ENCODE measurements at regions of chr7 and their contacts with region 1.

Region 1: DNA sequence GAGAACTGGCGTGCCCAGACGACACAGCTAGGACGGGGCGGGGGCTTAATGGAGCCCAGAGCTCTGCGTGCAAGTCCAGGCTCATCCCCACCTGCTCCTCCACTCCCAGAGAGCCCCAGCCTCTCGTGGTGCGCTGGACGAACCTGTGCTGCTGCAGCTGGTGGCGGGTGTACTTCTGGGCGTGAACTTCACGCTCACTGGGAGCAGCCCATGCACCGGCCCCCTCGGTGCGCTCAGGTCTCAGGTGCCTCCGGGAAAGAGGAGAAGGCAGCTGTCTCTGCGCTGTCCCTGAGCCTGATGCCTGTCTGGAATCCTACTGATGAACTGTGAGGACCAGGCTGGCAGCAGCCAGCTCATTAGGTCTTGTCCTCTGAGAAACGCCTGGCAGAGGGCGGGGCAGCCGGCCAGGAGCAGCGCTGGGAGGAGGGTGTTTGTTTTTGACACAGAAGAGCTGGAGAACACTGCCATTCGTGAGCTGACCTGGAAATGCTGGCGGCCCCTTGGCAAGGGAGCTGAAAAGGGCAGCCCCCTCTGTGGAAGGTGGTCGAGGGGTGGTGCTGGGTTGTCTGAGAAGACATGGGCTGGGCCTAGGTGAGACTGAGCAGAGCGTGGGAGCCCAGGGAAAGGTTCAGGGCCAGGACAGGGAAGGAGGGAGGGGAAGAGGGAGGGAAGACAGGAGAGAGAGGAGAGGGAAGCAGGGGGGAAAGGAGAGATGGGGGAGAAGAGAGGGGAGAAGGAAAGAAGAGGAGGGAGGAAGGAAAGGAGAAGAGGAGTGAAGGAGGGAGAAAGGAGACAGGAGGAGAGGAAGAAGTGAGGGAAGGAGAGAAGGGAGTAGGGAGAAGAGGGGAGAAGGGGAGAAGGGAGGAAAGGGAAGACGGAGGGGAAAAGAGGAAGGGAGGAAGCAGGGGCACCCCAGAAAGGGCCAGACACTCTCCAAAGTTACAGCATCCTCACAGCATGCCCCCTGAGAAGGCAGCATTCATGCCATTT is 53.5 kb upstream of the TNS3 start:
- DNase-seq: peak; percentile 57
- ATAC-seq: peak; percentile 84
- H3K4me3 ChIP-seq: peak overlapping the region; percentile 52 to 74 (median 57)
- H3K27ac ChIP-seq: peak overlapping the region; percentile 7
- H3K4me1 ChIP-seq: peaks cover 66% of the 10 kb centered on the region
- H3K27me3 ChIP-seq: no peaks in the 10 kb centered on the region
- CTCF ChIP-seq: peak; percentile 16
- EP300 ChIP-seq: no peak
- POLR2A ChIP-seq: peak in 1 of 2 experiments; percentile 55; a peak in 2 of 4 replicates
- RAD21 ChIP-seq: 0 out of 2 replicates have a peak, but pooled peaks have one; percentile 39

Region 2: GRCh38 chr7:47581806-47582763 is 53.3 kb before region 1 on chr7 and contains the start of gene TNS3:
- CTCF ChIA-PET with region 1: no interaction called
- POLR2A ChIA-PET with region 1: interaction called, 5 read pairs
- in situ Hi-C with region 1: no loop called
- intact Hi-C with region 1: loop called (anchors 5 kb)
- DNase-seq: no peak
- ATAC-seq: peak; percentile 83
- H3K4me3 ChIP-seq: peak within 1 kb of the TSS; percentile 86 to 91 (median 89)
- H3K27ac ChIP-seq: peak within 1 kb of the TSS; percentile 82
- H3K4me1 ChIP-seq: peaks cover 56% of the 10 kb centered on the region
- H3K27me3 ChIP-seq: no peaks in the 10 kb centered on the region; a peak in 1 of 5 replicates
- CTCF ChIP-seq: peak; percentile 26; the same call in 1 of the 2 replicates
- EP300 ChIP-seq: no peak
- POLR2A ChIP-seq: peak; percentile 25 to 39; a peak in 2 of 4 replicates
- RAD21 ChIP-seq: peak; percentile 89
- total RNA-seq, gene TNS3: 51.3 and 55.7 TPM in 2 replicates

Region 3: GRCh38 chr7:47596502-47597202 is 38.7 kb before region 1 on chr7:
- CTCF ChIA-PET with region 1: no interaction called
- POLR2A ChIA-PET with region 1: no interaction called
- in situ Hi-C with region 1: no loop called
- intact Hi-C with region 1: no loop called
- DNase-seq: peak; percentile 28
- ATAC-seq: peak; percentile 65
- H3K4me3 ChIP-seq: peak overlapping the region in 1 of 3 experiments; percentile 13; a peak in 1 of 6 replicates
- H3K27ac ChIP-seq: peak overlapping the region; percentile 26
- H3K4me1 ChIP-seq: peaks cover 51% of the 10 kb centered on the region
- H3K27me3 ChIP-seq: no peaks in the 10 kb centered on the region
- CTCF ChIP-seq: peak; percentile 40
- EP300 ChIP-seq: no peak
- POLR2A ChIP-seq: no peak
- RAD21 ChIP-seq: peak; percentile 17; the same call in 1 of the 2 replicates

Region 4: DNA sequence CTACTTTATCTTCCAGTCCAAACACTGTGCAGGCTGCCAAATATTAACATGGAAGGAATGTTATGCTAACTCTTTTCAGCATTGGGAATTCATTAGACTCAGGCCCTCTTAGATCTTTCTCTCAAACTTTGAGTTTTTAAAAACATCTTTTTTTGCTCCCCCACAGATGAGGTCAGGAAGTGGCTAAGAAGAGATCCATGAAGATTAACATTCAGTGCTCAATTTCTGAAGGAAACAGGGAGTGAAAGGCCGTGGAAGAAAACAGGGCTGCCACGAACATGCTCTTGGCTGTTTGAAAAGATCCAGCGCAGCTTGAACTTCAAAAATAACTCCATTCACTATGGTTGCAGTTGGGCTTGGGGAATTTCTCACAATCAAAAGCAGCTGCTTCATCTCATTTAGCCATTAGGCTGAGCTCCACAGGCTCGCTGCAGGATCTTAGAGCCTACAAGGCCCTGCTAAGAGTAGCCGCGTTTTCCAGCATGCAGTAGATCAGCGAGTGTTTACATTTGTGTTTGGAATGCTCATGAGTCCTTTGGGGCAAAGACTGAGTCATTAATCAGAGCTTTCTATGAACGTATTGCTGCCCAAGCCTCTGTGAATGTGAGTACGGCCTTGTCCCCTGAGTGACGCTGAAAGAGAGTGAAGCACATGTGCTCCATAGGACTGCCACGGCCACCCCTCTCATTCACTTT is 12.3 kb before region 1 on chr7:
- CTCF ChIA-PET with region 1: no interaction called
- POLR2A ChIA-PET with region 1: interaction called, 14 read pairs
- in situ Hi-C with region 1: no loop called
- intact Hi-C with region 1: no loop called
- DNase-seq: peak; percentile 89
- ATAC-seq: peak; percentile 93
- H3K4me3 ChIP-seq: peak overlapping the region in 2 of 3 experiments; percentile 13 to 46; a peak in 2 of 6 replicates
- H3K27ac ChIP-seq: peak overlapping the region; percentile 71
- H3K4me1 ChIP-seq: peaks cover 64% of the 10 kb centered on the region
- H3K27me3 ChIP-seq: no peaks in the 10 kb centered on the region
- CTCF ChIP-seq: no peak
- EP300 ChIP-seq: peak in 1 of 2 experiments; percentile 58; a peak in 1 of 4 replicates
- POLR2A ChIP-seq: peak in 1 of 2 experiments; percentile 54; a peak in 2 of 4 replicates
- RAD21 ChIP-seq: no peak

Region 5: GRCh38 chr7:47669061-47669891 is 33.9 kb after region 1 on chr7:
- CTCF ChIA-PET with region 1: no interaction called
- POLR2A ChIA-PET with region 1: no interaction called
- in situ Hi-C with region 1: no loop called
- intact Hi-C with region 1: loop called (anchors 2 kb)
- DNase-seq: peak; percentile 37
- ATAC-seq: peak; percentile 34; the same call in 1 of the 3 replicates
- H3K4me3 ChIP-seq: no peak overlapping the region
- H3K27ac ChIP-seq: no peak overlapping the region
- H3K4me1 ChIP-seq: peaks cover 63% of the 10 kb centered on the region
- H3K27me3 ChIP-seq: no peaks in the 10 kb centered on the region
- CTCF ChIP-seq: no peak
- EP300 ChIP-seq: no peak
- POLR2A ChIP-seq: no peak
- RAD21 ChIP-seq: no peak

Region 6: GRCh38 chr7:47905096-47905920 is 269.9 kb after region 1 on chr7:
- CTCF ChIA-PET with region 1: no interaction called
- POLR2A ChIA-PET with region 1: no interaction called
- in situ Hi-C with region 1: no loop called
- intact Hi-C with region 1: no loop called
- DNase-seq: no peak
- ATAC-seq: no peak
- H3K4me3 ChIP-seq: no peak overlapping the region
- H3K27ac ChIP-seq: no peak overlapping the region
- H3K4me1 ChIP-seq: peaks cover 7% of the 10 kb centered on the region; the same call in 1 of the 2 replicates
- H3K27me3 ChIP-seq: no peaks in the 10 kb centered on the region; a peak in 1 of 5 replicates
- CTCF ChIP-seq: no peak
- EP300 ChIP-seq: no peak
- POLR2A ChIP-seq: no peak
- RAD21 ChIP-seq: no peak

Region 7: GRCh38 chr7:47924270-47924669 is 288.9 kb after region 1 on chr7:
- CTCF ChIA-PET with region 1: no interaction called
- POLR2A ChIA-PET with region 1: no interaction called
- in situ Hi-C with region 1: no loop called
- intact Hi-C with region 1: no loop called
- DNase-seq: no peak
- ATAC-seq: no peak
- H3K4me3 ChIP-seq: no peak overlapping the region
- H3K27ac ChIP-seq: no peak overlapping the region
- H3K4me1 ChIP-seq: no peaks in the 10 kb centered on the region
- H3K27me3 ChIP-seq: no peaks in the 10 kb centered on the region
- CTCF ChIP-seq: no peak
- EP300 ChIP-seq: no peak
- POLR2A ChIP-seq: no peak
- RAD21 ChIP-seq: no peak

Region 8: DNA sequence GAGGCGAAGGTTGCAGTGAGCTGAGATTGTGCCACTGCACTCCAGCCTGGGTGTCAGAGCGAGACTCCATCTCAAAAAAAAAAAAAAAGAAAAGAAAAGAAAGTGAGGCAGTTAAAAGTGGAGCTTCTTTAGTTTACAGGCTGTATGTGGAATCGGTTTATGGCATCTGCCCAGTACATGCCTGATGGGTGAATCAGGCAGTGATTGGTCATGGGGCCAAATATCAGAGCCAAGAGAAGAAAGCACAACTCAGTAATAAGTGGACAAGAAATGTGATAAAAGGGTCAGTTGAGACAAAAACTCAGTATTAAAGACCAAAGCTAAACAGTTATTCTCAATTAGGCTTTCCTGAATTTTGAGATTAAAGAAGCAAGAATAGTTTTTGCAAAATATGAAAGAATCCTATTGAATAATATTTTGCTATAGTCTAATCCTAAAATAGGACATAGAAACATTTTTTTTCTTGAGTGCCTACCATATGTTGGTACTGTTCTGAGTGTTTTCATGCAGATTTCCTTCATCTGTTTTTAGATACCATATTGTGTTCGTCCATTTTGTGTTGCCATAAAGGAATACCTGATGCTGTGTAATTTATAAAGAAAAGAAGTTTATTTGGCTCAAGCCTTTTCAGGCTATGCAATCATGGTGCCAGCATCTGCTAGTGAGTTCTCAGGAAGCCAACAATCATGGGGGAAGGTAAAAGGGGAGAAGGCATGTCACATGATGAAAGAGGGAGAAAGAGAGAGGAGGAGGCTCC is 1303.3 kb after region 1 on chr7:
- CTCF ChIA-PET with region 1: no interaction called
- POLR2A ChIA-PET with region 1: no interaction called
- in situ Hi-C with region 1: no loop called
- intact Hi-C with region 1: no loop called
- DNase-seq: no peak
- ATAC-seq: no peak
- H3K4me3 ChIP-seq: no peak overlapping the region
- H3K27ac ChIP-seq: no peak overlapping the region
- H3K4me1 ChIP-seq: no peaks in the 10 kb centered on the region
- H3K27me3 ChIP-seq: no peaks in the 10 kb centered on the region
- CTCF ChIP-seq: no peak
- EP300 ChIP-seq: no peak
- POLR2A ChIP-seq: no peak
- RAD21 ChIP-seq: no peak